ENCODE measurements at regions of chr12 and their contacts with region 1.

Region 1: GRCh38 chr12:103548622-103549601 is 38.2 kb upstream of the STAB2 start:
- DNase-seq: peak; percentile 67
- H3K4me3 ChIP-seq: no peak overlapping the region
- H3K27ac ChIP-seq: no peak overlapping the region
- H3K4me1 ChIP-seq: no peaks in the 10 kb centered on the region
- H3K27me3 ChIP-seq: peaks cover 7% of the 10 kb centered on the region
- CTCF ChIP-seq: peak; percentile 76 to 81 (median 78)
- EP300 ChIP-seq: no peak
- POLR2A ChIP-seq: no peak

Region 2: GRCh38 chr12:102883204-102883799 is 665.6 kb before region 1 on chr12:
- in situ Hi-C with region 1: loop called in 1 of 4 experiments (anchors 10 kb)
- intact Hi-C with region 1: loop called (anchors 10 kb)
- DNase-seq: peak; percentile 35
- H3K4me3 ChIP-seq: no peak overlapping the region
- H3K27ac ChIP-seq: no peak overlapping the region
- H3K4me1 ChIP-seq: no peaks in the 10 kb centered on the region
- H3K27me3 ChIP-seq: peaks cover 24% of the 10 kb centered on the region
- CTCF ChIP-seq: peak; percentile 56 to 72 (median 59)
- EP300 ChIP-seq: no peak
- POLR2A ChIP-seq: no peak

Region 3: GRCh38 chr12:102948941-102949352 is 600.0 kb before region 1 on chr12:
- in situ Hi-C with region 1: loop called (anchors 5 to 25 kb)
- intact Hi-C with region 1: loop called (anchors 5 kb)
- DNase-seq: peak; percentile 26
- H3K4me3 ChIP-seq: no peak overlapping the region
- H3K27ac ChIP-seq: no peak overlapping the region
- H3K4me1 ChIP-seq: no peaks in the 10 kb centered on the region
- H3K27me3 ChIP-seq: peaks cover 54% of the 10 kb centered on the region
- CTCF ChIP-seq: peak; percentile 81 to 90 (median 85)
- EP300 ChIP-seq: no peak
- POLR2A ChIP-seq: no peak

Region 4: GRCh38 chr12:103600967-103601728 is 52.2 kb after region 1 on chr12:
- in situ Hi-C with region 1: no loop called
- intact Hi-C with region 1: no loop called
- DNase-seq: no peak
- H3K4me3 ChIP-seq: no peak overlapping the region
- H3K27ac ChIP-seq: no peak overlapping the region
- H3K4me1 ChIP-seq: no peaks in the 10 kb centered on the region
- H3K27me3 ChIP-seq: no peaks in the 10 kb centered on the region
- CTCF ChIP-seq: no peak
- EP300 ChIP-seq: no peak
- POLR2A ChIP-seq: no peak

Measured in transverse colon (tissue), 4 donors.